ENCODE measurements at regions of chr15 and their contacts with region 1.

Region 1: DNA sequence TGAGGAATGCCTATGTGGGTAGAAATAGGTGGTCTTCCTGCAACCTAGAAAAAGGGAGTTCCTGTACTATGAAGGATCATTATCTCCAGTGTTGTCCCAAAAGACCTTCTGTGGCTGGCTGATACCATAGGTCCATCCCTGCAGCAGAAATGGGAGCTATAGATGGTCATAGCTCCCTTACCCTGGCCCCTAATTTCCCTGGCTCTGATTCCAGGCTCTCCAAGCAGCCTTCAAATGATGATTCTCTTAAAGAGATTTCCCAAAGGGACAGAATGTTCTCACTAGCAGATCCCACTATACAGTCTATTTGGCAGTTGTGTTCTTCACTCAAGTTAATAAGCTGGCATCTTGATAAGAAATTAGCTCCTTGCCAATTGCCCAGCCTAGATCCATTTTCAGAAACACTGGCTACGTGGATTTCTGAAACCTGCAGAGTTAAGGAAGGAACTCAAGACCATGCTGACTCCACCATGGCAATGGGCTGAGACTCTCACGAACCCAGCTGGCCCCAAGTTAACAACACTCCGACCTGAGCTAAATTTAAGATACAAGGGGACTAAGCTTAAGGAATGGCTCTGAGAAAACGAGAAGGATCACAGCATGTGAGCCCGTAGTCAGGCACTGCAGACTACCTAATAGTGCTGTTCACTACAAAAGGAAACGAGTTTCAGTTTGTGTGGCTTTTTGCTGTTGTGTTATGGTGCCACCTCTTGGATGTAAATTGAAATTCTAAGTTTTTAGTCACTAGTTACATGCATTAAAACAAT is 11.4 kb downstream of the C15orf40 start:
- DNase-seq: peak; percentile 56
- H3K4me3 ChIP-seq: no peak overlapping the region
- CTCF ChIP-seq: peak; percentile 50

Region 2: DNA sequence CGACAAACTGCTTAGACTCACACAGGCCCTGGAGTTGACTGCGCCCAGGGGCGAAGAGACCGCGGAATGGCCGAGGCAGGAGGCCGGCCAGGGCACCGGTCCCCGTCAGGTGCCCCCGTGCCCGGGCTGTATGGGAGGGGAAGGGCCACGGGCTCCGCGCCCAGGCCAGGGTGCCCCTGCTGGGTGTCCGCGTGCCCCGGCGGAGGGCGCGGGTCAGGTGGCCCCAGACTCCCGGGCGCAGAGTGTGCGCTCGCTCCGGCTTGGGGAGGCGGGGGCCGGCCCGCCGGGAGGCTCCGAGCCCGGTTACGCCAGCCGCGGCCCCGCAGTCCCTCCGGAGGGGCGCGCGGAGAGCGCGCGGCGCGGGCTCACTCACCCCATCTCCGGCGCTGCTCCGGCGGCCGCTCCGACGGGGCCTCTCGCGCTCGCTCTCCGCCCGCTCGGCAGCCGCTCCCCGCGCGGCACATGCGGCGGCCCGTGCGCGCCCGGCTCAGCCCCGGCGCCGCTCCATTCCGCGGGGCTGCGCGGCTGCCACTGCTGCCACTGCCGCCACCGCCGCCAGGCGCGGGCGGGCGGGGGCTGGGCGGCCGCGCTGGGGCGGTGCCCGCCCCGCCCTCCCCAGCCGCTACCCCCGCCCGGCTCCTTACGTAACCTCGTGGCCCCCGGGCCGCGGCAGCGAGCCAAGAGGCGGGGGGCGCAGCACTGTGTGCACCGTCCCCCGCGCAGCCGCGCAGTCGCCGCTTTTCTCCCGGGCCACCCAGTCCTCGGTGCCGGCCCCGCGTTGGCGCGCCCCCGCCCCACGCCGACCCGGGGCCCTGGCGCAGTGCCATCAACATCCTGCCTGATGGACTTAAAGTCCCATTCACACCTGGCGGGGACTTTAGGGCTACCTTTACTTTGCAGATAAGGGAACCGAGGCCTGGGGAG is 47.7 kb before region 1 on chr15 and contains the start of gene HOMER2:
- in situ Hi-C with region 1: loop called (anchors 5 kb)
- DNase-seq: no peak
- H3K4me3 ChIP-seq: peak within 1 kb of the TSS; percentile 45
- CTCF ChIP-seq: no peak

Region 3: DNA sequence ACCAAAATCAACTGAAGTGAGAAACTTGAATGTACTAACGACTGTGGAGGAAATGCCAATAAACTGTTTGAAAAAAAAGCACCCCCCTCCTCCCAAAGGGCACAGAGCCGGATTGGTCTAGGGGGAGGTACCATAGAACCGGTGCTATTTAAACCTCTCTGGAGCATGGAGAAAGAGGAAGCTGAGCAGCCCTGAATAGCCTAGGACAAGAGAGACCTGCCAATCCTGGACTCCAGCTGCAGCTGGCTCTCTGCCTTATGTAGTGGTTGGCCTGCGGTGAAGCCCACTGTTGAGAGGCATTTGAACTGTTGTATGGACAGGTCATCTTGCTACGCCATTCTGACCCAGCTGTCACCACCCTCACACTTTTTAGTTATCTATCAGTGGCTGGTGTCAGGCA is 445.6 kb after region 1 on chr15:
- in situ Hi-C with region 1: no loop called
- DNase-seq: peak; percentile 4
- H3K4me3 ChIP-seq: no peak overlapping the region
- CTCF ChIP-seq: no peak

Measured in astrocyte of the cerebellum (primary cell).